Activated T-helper 1 cell treated with anti-CD3 and anti-CD28 coated beads, Interleukin-12 subunit alpha, Interleukin-12 subunit beta, Interleukin-2, Interleukin-4 antibody, amounts not matched to agents 30 ng/mL and 10 ng/mL and 1 ng/mL, durations not matched to agents 14 hours and 24 hours and 36 hours (primary cell): ENCODE measurements at regions of chr17 and their contacts with region 1.

Region 1: GRCh38 chr17:36072431-36073121 is 8.5 kb downstream of the CCL18 start:
- DNase-seq: peak; percentile 48
- H3K4me3 Mint-ChIP-seq: no peak overlapping the region
- H3K27ac Mint-ChIP-seq: peak overlapping the region; percentile 54
- H3K4me1 Mint-ChIP-seq: peaks cover 23% of the 10 kb centered on the region
- H3K27me3 Mint-ChIP-seq: peaks cover 4% of the 10 kb centered on the region

Region 2: GRCh38 chr17:35879773-35880654 is 192.6 kb before region 1 on chr17 and contains the start of gene CCL5:
- intact Hi-C with region 1: loop called (anchors 5 kb)
- DNase-seq: peak; percentile 66
- H3K4me3 Mint-ChIP-seq: peak within 1 kb of the TSS; percentile 86
- H3K27ac Mint-ChIP-seq: peak within 1 kb of the TSS; percentile 99
- H3K4me1 Mint-ChIP-seq: peaks cover 57% of the 10 kb centered on the region
- H3K27me3 Mint-ChIP-seq: no peaks in the 10 kb centered on the region
- total RNA-seq, gene CCL5: 25.4 and 30.2 TPM in 2 replicates

Region 3: DNA sequence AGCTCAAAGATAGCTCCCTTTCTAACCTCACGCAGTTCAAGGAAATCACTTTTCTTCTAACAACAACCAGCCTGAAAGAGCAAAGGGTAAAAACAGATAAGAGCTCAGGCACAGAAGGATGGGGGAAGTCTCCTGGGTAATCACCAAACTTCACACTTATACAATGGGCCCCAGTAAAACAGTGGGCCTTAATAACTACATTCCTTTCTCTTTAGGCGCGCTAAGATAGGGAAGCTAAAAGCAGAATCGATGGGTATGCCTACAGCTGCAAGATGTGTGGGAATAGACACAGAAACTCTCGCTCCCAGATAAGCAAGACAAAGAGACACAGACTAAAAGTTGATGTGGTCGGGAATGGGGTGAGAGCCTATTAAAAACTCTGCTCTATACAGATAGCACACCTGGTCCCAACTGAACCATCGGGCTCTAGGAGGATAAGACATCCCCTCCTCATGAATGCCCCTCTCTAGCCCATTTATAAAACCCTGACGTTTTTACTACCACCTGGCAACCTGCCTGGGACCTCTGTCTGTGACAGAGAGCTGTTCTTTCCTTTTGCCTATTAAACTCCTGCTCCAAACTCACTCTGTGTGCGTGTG is 129.9 kb before region 1 on chr17:
- intact Hi-C with region 1: no loop called
- DNase-seq: no peak
- H3K4me3 Mint-ChIP-seq: no peak overlapping the region
- H3K27ac Mint-ChIP-seq: no peak overlapping the region
- H3K4me1 Mint-ChIP-seq: peaks cover 4% of the 10 kb centered on the region
- H3K27me3 Mint-ChIP-seq: peaks cover 11% of the 10 kb centered on the region

Region 4: GRCh38 chr17:35969558-35970380 is 102.8 kb before region 1 on chr17:
- intact Hi-C with region 1: loop called (anchors 1 kb)
- DNase-seq: peak; percentile 61
- H3K4me3 Mint-ChIP-seq: no peak overlapping the region
- H3K27ac Mint-ChIP-seq: no peak overlapping the region
- H3K4me1 Mint-ChIP-seq: no peaks in the 10 kb centered on the region
- H3K27me3 Mint-ChIP-seq: peaks cover 12% of the 10 kb centered on the region

Region 5: GRCh38 chr17:36048066-36048465 is 24.5 kb before region 1 on chr17:
- intact Hi-C with region 1: no loop called
- DNase-seq: no peak
- H3K4me3 Mint-ChIP-seq: no peak overlapping the region
- H3K27ac Mint-ChIP-seq: no peak overlapping the region
- H3K4me1 Mint-ChIP-seq: no peaks in the 10 kb centered on the region
- H3K27me3 Mint-ChIP-seq: peaks cover 30% of the 10 kb centered on the region

Region 6: GRCh38 chr17:36107660-36108059 is 35.1 kb after region 1 on chr17:
- intact Hi-C with region 1: loop called (anchors 1 kb)
- DNase-seq: no peak
- H3K4me3 Mint-ChIP-seq: no peak overlapping the region
- H3K27ac Mint-ChIP-seq: peak overlapping the region; percentile 36
- H3K4me1 Mint-ChIP-seq: peaks cover 24% of the 10 kb centered on the region
- H3K27me3 Mint-ChIP-seq: peaks cover 10% of the 10 kb centered on the region

Region 7: GRCh38 chr17:36148559-36149295 is 76.2 kb after region 1 on chr17:
- intact Hi-C with region 1: loop called (anchors 1 kb)
- DNase-seq: peak; percentile 48
- H3K4me3 Mint-ChIP-seq: no peak overlapping the region
- H3K27ac Mint-ChIP-seq: no peak overlapping the region
- H3K4me1 Mint-ChIP-seq: peaks cover 4% of the 10 kb centered on the region
- H3K27me3 Mint-ChIP-seq: peaks cover 11% of the 10 kb centered on the region